Transverse colon (tissue), 4 donors: ENCODE measurements at regions of chr13 and their contacts with region 1.

Region 1: DNA sequence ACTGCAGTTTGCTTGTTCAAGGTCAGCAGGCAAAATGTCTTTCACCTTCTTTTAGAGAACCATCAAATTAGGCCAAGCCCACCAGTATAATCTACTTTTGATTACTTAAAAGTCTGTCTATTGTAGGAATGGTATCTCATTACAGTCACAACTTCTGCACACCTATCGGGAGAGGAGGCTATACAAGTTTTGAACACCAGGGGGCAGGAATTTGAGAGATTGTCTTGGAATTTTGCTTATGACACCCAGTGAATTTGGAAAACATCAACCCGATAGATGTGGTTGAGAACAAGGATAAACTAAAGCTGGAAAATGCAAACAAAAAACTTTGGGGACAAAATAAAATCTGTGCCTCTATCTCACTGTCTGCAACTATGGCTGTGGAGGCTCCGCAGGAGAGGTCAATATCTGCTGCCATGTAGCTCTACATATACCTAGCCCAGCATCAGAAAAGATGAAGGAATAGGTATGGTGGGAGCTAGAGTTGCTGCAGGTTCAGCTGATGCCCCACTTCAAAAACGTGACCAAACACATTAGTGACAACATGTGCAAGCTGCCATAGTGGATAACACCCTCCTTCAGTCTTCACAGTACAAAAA is 1299.2 kb upstream of the SPRY2 start:
- DNase-seq: no peak
- H3K4me3 ChIP-seq: no peak overlapping the region
- H3K27ac ChIP-seq: no peak overlapping the region
- H3K4me1 ChIP-seq: no peaks in the 10 kb centered on the region
- H3K27me3 ChIP-seq: no peaks in the 10 kb centered on the region
- CTCF ChIP-seq: peak in 2 of 5 experiments; percentile 10 to 45
- EP300 ChIP-seq: no peak
- POLR2A ChIP-seq: no peak

Region 2: GRCh38 chr13:81770868-81771505 is 130.9 kb after region 1 on chr13:
- in situ Hi-C with region 1: no loop called
- intact Hi-C with region 1: no loop called
- DNase-seq: no peak
- H3K4me3 ChIP-seq: no peak overlapping the region
- H3K27ac ChIP-seq: no peak overlapping the region
- H3K4me1 ChIP-seq: no peaks in the 10 kb centered on the region
- H3K27me3 ChIP-seq: no peaks in the 10 kb centered on the region
- CTCF ChIP-seq: no peak
- EP300 ChIP-seq: no peak
- POLR2A ChIP-seq: no peak

Region 3: DNA sequence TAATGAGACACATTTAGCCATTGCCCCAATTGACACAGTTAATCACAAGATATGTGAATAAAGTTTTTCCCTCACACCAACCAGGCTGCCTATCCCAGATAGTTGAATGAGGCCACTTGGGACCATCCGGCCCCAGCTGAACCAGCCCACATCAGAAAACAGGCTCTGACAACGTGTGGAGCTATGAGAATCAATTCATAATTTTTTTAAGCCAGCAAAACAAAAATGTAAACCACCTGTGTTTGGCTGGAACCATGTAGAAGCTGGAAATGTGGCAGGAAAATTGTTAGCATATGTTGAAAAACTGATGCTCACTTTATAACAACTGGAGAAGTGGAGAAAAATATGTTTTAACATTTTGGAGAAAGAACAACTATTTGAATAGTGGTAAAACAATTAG is 1080.9 kb after region 1 on chr13:
- in situ Hi-C with region 1: no loop called
- intact Hi-C with region 1: loop called (anchors 5 kb)
- DNase-seq: no peak
- H3K4me3 ChIP-seq: no peak overlapping the region
- H3K27ac ChIP-seq: no peak overlapping the region
- H3K4me1 ChIP-seq: no peaks in the 10 kb centered on the region
- H3K27me3 ChIP-seq: no peaks in the 10 kb centered on the region
- CTCF ChIP-seq: no peak
- EP300 ChIP-seq: no peak
- POLR2A ChIP-seq: no peak